ENCODE measurements at regions of chr1 and their contacts with region 1.

Region 1: GRCh38 chr1:86696522-86696921 is 7.9 kb upstream of the SH3GLB1 start:
- DNase-seq: no peak
- ATAC-seq: no peak
- H3K4me3 ChIP-seq: no peak overlapping the region
- H3K27ac ChIP-seq: no peak overlapping the region
- H3K4me1 ChIP-seq: no peaks in the 10 kb centered on the region
- H3K27me3 ChIP-seq: no peaks in the 10 kb centered on the region
- CTCF ChIP-seq: no peak
- POLR2A ChIP-seq: no peak

Region 2: GRCh38 chr1:86487131-86487810 is 209.3 kb before region 1 on chr1:
- intact Hi-C with region 1: loop called in 2 of 10 experiments (anchors 10 kb)
- DNase-seq: peak; percentile 59 to 75 (median 62)
- ATAC-seq: peak; percentile 87 to 92 (median 89)
- H3K4me3 ChIP-seq: no peak overlapping the region
- H3K27ac ChIP-seq: peak overlapping the region in 9 of 12 donors; percentile 16 to 75 (median 62)
- H3K4me1 ChIP-seq: peaks cover 0 to 4% (median 0%) of the 10 kb centered on the region in 12 donors
- H3K27me3 ChIP-seq: no peaks in the 10 kb centered on the region
- CTCF ChIP-seq: no peak
- POLR2A ChIP-seq: no peak

Region 3: GRCh38 chr1:86507935-86508582 is 188.5 kb before region 1 on chr1:
- intact Hi-C with region 1: loop called in 5 of 10 experiments (anchors 5 to 10 kb)
- DNase-seq: peak in 1 of 5 donors; percentile 21
- ATAC-seq: no peak
- H3K4me3 ChIP-seq: no peak overlapping the region
- H3K27ac ChIP-seq: no peak overlapping the region
- H3K4me1 ChIP-seq: peaks cover 0 to 24% (median 8%) of the 10 kb centered on the region in 12 donors
- H3K27me3 ChIP-seq: no peaks in the 10 kb centered on the region
- CTCF ChIP-seq: peak; percentile 29 to 66 (median 52)
- POLR2A ChIP-seq: no peak